ENCODE measurements at regions of chr5 and their contacts with region 1.

Region 1: DNA sequence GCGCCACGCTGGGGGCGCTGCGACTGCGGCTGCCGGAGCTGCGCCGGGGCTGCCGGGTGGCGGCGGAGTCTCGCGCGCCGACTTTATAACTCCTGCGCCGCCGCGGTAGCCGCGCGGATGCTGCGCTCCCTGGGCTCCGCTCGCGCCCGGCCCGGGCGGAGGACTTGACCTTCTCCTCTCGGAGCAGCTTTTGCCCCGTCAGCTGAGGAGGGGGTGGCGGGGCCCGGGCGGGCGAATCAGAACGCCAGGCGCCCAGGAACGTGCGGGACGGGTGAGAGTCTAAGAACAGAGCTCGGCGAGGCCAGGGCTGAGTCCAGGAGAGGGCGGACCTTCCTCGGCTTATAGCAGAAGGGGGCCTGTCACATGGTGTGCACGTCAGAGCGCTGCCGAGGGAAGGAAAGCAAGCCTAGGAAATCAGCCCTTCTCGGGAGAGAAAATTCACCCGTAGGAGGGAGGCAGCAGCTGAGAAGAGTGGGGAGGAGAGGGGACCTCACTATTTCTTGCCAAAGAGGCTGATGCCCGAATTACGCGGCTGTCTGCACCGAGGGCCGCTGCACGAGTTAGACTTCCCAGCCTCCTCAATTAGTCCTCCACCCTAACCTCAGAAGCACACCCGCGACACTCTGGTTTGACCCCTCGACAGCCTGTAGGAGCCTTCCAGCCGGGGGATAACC is at the start of gene FOXD1:
- DNase-seq: peak; percentile 75

Region 2: GRCh38 chr5:73088026-73088425 is 360.6 kb before region 1 on chr5:
- CTCF ChIA-PET with region 1: no interaction called
- POLR2A ChIA-PET with region 1: no interaction called
- DNase-seq: no peak

Region 3: GRCh38 chr5:73215891-73216610 is 232.5 kb before region 1 on chr5:
- CTCF ChIA-PET with region 1: interaction called, 10 read pairs
- POLR2A ChIA-PET with region 1: interaction called, 32 read pairs
- DNase-seq: peak; percentile 89

Region 4: GRCh38 chr5:73378070-73378469 is 70.5 kb before region 1 on chr5:
- CTCF ChIA-PET with region 1: no interaction called
- POLR2A ChIA-PET with region 1: interaction called, 15 read pairs
- DNase-seq: peak; percentile 60

Region 5: GRCh38 chr5:73412597-73412988 is 36.0 kb before region 1 on chr5:
- CTCF ChIA-PET with region 1: no interaction called
- POLR2A ChIA-PET with region 1: no interaction called
- DNase-seq: no peak

Region 6: GRCh38 chr5:73437101-73437776 is 11.4 kb before region 1 on chr5:
- CTCF ChIA-PET with region 1: interaction called, 3 read pairs
- POLR2A ChIA-PET with region 1: interaction called, 26 read pairs
- DNase-seq: peak; percentile 77

Region 7: GRCh38 chr5:73498057-73499008 is 49.7 kb after region 1 on chr5 and contains the start of gene BTF3:
- CTCF ChIA-PET with region 1: interaction called, 3 read pairs
- POLR2A ChIA-PET with region 1: interaction called, 14 read pairs
- DNase-seq: peak; percentile 91